ENCODE measurements at regions of chr7 and their contacts with region 1.

Region 1: DNA sequence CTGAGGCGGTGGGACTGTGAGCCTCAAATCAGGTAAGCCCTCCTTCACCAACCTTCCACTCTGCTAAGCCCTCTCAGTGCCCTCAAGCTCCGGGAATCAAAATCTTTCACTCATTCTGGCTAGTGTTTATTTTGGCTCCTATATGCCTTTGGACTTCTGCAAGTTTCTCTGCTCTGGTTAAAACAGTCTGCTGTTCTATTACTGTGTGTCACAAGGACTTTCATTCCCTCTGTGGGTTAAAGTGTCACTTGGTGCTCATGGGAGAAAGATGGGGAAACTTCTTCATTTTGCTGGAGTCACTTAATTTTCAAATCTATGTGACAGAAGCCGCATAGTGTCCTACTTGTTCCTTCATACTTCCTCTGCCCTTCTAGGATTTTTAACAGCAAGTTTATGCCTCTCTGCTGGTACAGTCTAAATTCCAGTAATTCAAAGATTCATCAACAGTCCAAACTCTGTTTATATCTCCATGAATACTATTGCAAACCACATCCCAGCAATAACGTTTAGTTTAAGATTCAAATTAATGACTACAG is 61.3 kb downstream of the CD36 start:
- DNase-seq: no peak
- H3K4me3 ChIP-seq: no peak overlapping the region
- H3K4me1 ChIP-seq: no peaks in the 10 kb centered on the region
- H3K27me3 ChIP-seq: peaks cover 4% of the 10 kb centered on the region; the same call in 1 of the 2 replicates

Region 2: GRCh38 chr7:81462672-81463071 is 762.9 kb after region 1 on chr7:
- in situ Hi-C with region 1: loop called (anchors 5 kb)
- DNase-seq: no peak
- H3K4me3 ChIP-seq: no peak overlapping the region
- H3K4me1 ChIP-seq: no peaks in the 10 kb centered on the region
- H3K27me3 ChIP-seq: peaks cover 7% of the 10 kb centered on the region; the same call in 1 of the 2 replicates